ENCODE measurements at regions of chr12 and their contacts with region 1.

Region 1: DNA sequence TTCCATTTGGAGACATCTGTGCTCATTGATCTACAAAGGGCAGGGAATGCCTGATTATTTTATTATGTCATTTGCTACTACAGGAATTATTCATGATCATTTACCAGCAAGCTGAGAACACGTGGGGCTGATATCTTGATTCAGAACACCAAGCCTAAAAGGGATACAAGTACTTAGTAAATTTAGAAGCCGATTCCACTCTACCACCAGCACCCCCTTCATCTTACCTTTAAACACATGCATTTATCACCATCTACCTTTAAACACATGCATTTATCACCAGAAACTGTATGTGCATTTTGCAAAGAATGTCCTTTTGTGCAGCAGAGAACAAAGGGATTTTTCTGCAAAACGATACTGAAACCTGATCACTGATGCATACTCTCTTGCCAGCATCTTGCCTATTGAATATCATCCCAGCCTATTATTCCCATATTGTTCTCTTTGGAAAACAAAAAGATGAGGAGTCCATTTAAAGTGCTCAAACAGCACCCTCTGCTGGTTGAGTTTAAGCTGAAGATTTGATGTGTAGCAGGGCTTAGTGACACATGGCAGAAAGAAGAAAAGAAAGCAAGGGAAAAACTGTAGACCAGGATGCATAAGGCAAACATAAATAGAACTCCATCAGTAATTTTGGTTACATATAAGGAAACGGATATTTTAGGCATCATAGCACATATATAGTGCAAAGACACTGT is 132.6 kb upstream of the PLEKHG7 start:
- DNase-seq: peak; percentile 54 to 76 (median 74)
- H3K4me3 ChIP-seq: no peak overlapping the region
- H3K4me3 Mint-ChIP-seq: no peak overlapping the region
- H3K27ac ChIP-seq: no peak overlapping the region
- H3K27ac Mint-ChIP-seq: no peak overlapping the region
- H3K4me1 ChIP-seq: peaks cover 26% of the 10 kb centered on the region
- H3K4me1 Mint-ChIP-seq: peaks cover 4 to 17% (median 10%) of the 10 kb centered on the region in 4 donors
- H3K27me3 ChIP-seq: no peaks in the 10 kb centered on the region
- H3K27me3 Mint-ChIP-seq: no peaks in the 10 kb centered on the region

Region 2: DNA sequence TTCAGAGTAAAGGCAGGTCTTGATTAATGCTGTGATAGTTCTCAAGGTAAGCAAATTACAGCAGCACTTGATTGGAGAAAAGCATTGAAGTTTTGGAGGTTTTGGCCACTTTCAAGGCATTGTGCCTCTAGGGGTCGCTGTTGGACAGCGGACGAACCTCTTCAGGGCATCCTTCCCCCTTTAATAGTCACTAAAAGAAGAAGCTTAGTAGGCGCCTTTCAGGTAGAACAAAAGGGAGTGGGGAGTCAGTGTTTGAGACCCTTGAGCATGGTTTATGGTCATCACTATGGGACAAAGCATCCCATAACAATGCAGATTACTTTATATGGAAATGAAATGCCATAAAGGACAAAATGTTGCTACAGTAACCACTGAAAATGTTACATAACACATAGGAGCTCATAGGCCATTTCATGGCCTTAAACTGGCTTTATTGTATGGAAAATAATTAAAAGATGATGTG is 1188.1 kb before region 1 on chr12:
- CTCF ChIA-PET with region 1: interaction called, 47 read pairs
- POLR2A ChIA-PET with region 1: interaction called, 3 read pairs
- intact Hi-C with region 1: loop called (anchors 1 kb)
- DNase-seq: peak; percentile 72 to 79 (median 78)
- H3K4me3 ChIP-seq: no peak overlapping the region
- H3K4me3 Mint-ChIP-seq: peak overlapping the region; percentile 46 to 79 (median 63)
- H3K27ac ChIP-seq: no peak overlapping the region
- H3K27ac Mint-ChIP-seq: peak overlapping the region in 2 of 7 donors; percentile 23 to 31
- H3K4me1 ChIP-seq: peaks cover 7% of the 10 kb centered on the region
- H3K4me1 Mint-ChIP-seq: peaks cover 2 to 5% (median 5%) of the 10 kb centered on the region in 4 donors
- H3K27me3 ChIP-seq: no peaks in the 10 kb centered on the region
- H3K27me3 Mint-ChIP-seq: peaks cover 3 to 6% of the 10 kb centered on the region in 2 donors

Region 3: DNA sequence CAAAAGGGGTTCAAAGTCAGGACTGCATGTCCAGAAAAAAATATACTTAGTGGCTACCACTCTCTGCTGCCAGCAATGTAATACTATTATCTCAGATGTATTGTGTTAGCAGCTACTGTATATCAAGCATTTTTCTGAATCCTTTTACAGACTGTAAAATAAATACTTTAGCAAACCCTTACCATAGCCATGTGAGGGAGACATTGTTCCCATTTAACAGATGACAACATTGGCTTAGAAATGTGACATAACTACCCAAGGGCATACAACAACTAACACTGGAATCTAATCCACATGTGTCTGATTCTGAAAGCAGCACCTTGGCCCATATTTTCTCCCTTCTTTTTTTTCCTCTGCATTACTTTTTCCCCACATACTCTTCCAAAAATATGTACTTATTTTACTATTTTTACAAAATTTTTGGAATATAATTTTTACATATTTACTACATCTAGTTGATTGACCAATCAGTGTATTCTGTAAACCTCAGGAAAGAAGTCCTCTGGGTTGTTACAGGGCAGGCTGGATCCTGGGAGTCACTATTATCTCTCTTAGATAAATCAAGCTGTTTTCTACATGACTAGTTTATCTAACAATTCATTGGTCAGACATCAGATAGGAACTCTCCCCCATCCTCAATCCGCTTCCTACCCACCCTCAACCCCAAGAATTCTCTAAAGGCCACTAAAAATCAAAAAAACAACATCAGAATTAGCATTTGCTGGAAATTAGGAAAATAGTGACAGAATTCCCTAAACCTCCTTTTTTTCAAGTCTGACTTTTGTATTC is 578.6 kb before region 1 on chr12:
- CTCF ChIA-PET with region 1: interaction called, 7 read pairs
- POLR2A ChIA-PET with region 1: interaction called, 4 read pairs
- intact Hi-C with region 1: loop called (anchors 1 kb)
- DNase-seq: peak in 4 of 5 donors; percentile 51 to 67 (median 54)
- H3K4me3 ChIP-seq: no peak overlapping the region
- H3K4me3 Mint-ChIP-seq: no peak overlapping the region
- H3K27ac ChIP-seq: no peak overlapping the region
- H3K27ac Mint-ChIP-seq: peak overlapping the region in 5 of 7 donors; percentile 22 to 85 (median 70)
- H3K4me1 ChIP-seq: peaks cover 27% of the 10 kb centered on the region
- H3K4me1 Mint-ChIP-seq: peaks cover 18 to 37% (median 28%) of the 10 kb centered on the region in 4 donors
- H3K27me3 ChIP-seq: no peaks in the 10 kb centered on the region
- H3K27me3 Mint-ChIP-seq: no peaks in the 10 kb centered on the region

Region 4: GRCh38 chr12:92208613-92209121 is 361.5 kb before region 1 on chr12:
- CTCF ChIA-PET with region 1: interaction called, 6 read pairs
- POLR2A ChIA-PET with region 1: interaction called, 4 read pairs
- intact Hi-C with region 1: loop called (anchors 1 kb)
- DNase-seq: peak; percentile 61 to 78 (median 66)
- H3K4me3 ChIP-seq: peak overlapping the region in 1 of 2 donors; percentile 30
- H3K4me3 Mint-ChIP-seq: peak overlapping the region; percentile 63 to 88 (median 81)
- H3K27ac ChIP-seq: peak overlapping the region; percentile 19
- H3K27ac Mint-ChIP-seq: peak overlapping the region; percentile 77 to 95 (median 86)
- H3K4me1 ChIP-seq: peaks cover 31% of the 10 kb centered on the region
- H3K4me1 Mint-ChIP-seq: peaks cover 26 to 42% (median 35%) of the 10 kb centered on the region in 4 donors
- H3K27me3 ChIP-seq: no peaks in the 10 kb centered on the region
- H3K27me3 Mint-ChIP-seq: no peaks in the 10 kb centered on the region

Region 5: GRCh38 chr12:92408072-92408900 is 161.9 kb before region 1 on chr12:
- CTCF ChIA-PET with region 1: interaction called, 11 read pairs
- POLR2A ChIA-PET with region 1: interaction called, 13 read pairs
- intact Hi-C with region 1: no loop called
- DNase-seq: peak in 3 of 5 donors; percentile 38 to 45 (median 45)
- H3K4me3 ChIP-seq: no peak overlapping the region
- H3K4me3 Mint-ChIP-seq: peak overlapping the region in 5 of 8 donors; percentile 2 to 80 (median 30)
- H3K27ac ChIP-seq: no peak overlapping the region
- H3K27ac Mint-ChIP-seq: peak overlapping the region in 6 of 7 donors; percentile 30 to 91 (median 77)
- H3K4me1 ChIP-seq: peaks cover 40% of the 10 kb centered on the region
- H3K4me1 Mint-ChIP-seq: peaks cover 38 to 73% (median 49%) of the 10 kb centered on the region in 4 donors
- H3K27me3 ChIP-seq: no peaks in the 10 kb centered on the region
- H3K27me3 Mint-ChIP-seq: no peaks in the 10 kb centered on the region

Region 6: GRCh38 chr12:92493816-92494215 is 76.4 kb before region 1 on chr12:
- CTCF ChIA-PET with region 1: no interaction called
- POLR2A ChIA-PET with region 1: no interaction called
- intact Hi-C with region 1: no loop called
- DNase-seq: no peak
- H3K4me3 ChIP-seq: no peak overlapping the region
- H3K4me3 Mint-ChIP-seq: no peak overlapping the region
- H3K27ac ChIP-seq: no peak overlapping the region
- H3K27ac Mint-ChIP-seq: no peak overlapping the region
- H3K4me1 ChIP-seq: no peaks in the 10 kb centered on the region
- H3K4me1 Mint-ChIP-seq: peaks cover 0 to 2% (median 0%) of the 10 kb centered on the region in 4 donors
- H3K27me3 ChIP-seq: no peaks in the 10 kb centered on the region
- H3K27me3 Mint-ChIP-seq: no peaks in the 10 kb centered on the region

Region 7: GRCh38 chr12:92516277-92516600 is 54.0 kb before region 1 on chr12:
- CTCF ChIA-PET with region 1: no interaction called
- POLR2A ChIA-PET with region 1: no interaction called
- intact Hi-C with region 1: no loop called
- DNase-seq: no peak
- H3K4me3 ChIP-seq: no peak overlapping the region
- H3K4me3 Mint-ChIP-seq: no peak overlapping the region
- H3K27ac ChIP-seq: no peak overlapping the region
- H3K27ac Mint-ChIP-seq: no peak overlapping the region
- H3K4me1 ChIP-seq: no peaks in the 10 kb centered on the region
- H3K4me1 Mint-ChIP-seq: peaks cover 0 to 11% (median 2%) of the 10 kb centered on the region in 4 donors
- H3K27me3 ChIP-seq: no peaks in the 10 kb centered on the region
- H3K27me3 Mint-ChIP-seq: no peaks in the 10 kb centered on the region

Region 8: GRCh38 chr12:92556141-92556540 is 14.1 kb before region 1 on chr12:
- CTCF ChIA-PET with region 1: interaction called, 12 read pairs
- POLR2A ChIA-PET with region 1: interaction called, 8 read pairs
- intact Hi-C with region 1: no loop called
- DNase-seq: peak in 4 of 5 donors; percentile 22 to 34 (median 28)
- H3K4me3 ChIP-seq: peak overlapping the region; percentile 24 to 27
- H3K4me3 Mint-ChIP-seq: peak overlapping the region; percentile 31 to 79 (median 60)
- H3K27ac ChIP-seq: peak overlapping the region; percentile 30
- H3K27ac Mint-ChIP-seq: peak overlapping the region; percentile 49 to 96 (median 81)
- H3K4me1 ChIP-seq: peaks cover 50% of the 10 kb centered on the region
- H3K4me1 Mint-ChIP-seq: peaks cover 25 to 53% (median 40%) of the 10 kb centered on the region in 4 donors
- H3K27me3 ChIP-seq: no peaks in the 10 kb centered on the region
- H3K27me3 Mint-ChIP-seq: no peaks in the 10 kb centered on the region

Region 9: GRCh38 chr12:92649511-92650227 is 79.5 kb after region 1 on chr12:
- CTCF ChIA-PET with region 1: interaction called, 19 read pairs
- POLR2A ChIA-PET with region 1: interaction called, 6 read pairs
- intact Hi-C with region 1: loop called (anchors 1 kb)
- DNase-seq: peak; percentile 55 to 68 (median 59)
- H3K4me3 ChIP-seq: no peak overlapping the region
- H3K4me3 Mint-ChIP-seq: no peak overlapping the region
- H3K27ac ChIP-seq: no peak overlapping the region
- H3K27ac Mint-ChIP-seq: peak overlapping the region in 5 of 7 donors; percentile 31 to 74 (median 46)
- H3K4me1 ChIP-seq: no peaks in the 10 kb centered on the region
- H3K4me1 Mint-ChIP-seq: peaks cover 0 to 6% (median 4%) of the 10 kb centered on the region in 4 donors
- H3K27me3 ChIP-seq: no peaks in the 10 kb centered on the region
- H3K27me3 Mint-ChIP-seq: peaks cover 0 to 2% of the 10 kb centered on the region in 2 donors